ENCODE measurements at regions of chr2 and their contacts with region 1.

Region 1: GRCh38 chr2:112075490-112076260 is 20.6 kb downstream of the TMEM87B start:
- DNase-seq: peak; percentile 86
- H3K4me3 ChIP-seq: peak overlapping the region in 2 of 3 experiments; percentile 26 to 66
- H3K27ac ChIP-seq: peak overlapping the region; percentile 98
- H3K4me1 ChIP-seq: peaks cover 34% of the 10 kb centered on the region
- H3K27me3 ChIP-seq: no peaks in the 10 kb centered on the region
- CTCF ChIP-seq: no peak
- POLR2A ChIP-seq: peak; percentile 40

Region 2: DNA sequence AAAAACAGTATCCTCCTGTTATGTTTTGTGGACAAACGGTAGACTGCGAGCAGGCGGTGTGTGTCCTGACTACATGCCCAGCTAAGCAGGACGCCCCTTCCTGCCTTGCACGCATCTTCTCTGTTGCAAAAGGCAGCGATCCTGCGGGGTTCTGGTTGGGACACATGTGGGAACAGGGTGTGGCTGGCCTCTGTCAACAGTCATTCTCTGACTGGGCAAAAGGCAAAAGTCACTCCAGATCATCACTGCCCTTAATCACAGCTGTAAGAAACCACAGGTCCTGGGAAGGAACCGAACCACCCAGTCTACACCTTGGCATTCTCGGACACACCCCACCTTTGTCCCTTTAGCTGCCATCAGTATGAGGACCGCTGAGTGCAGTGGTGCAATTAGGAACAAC is 64.9 kb before region 1 on chr2:
- CTCF ChIA-PET with region 1: no interaction called
- POLR2A ChIA-PET with region 1: no interaction called
- dilution Hi-C with region 1: no loop called
- intact Hi-C with region 1: no loop called
- DNase-seq: no peak
- H3K4me3 ChIP-seq: no peak overlapping the region
- H3K27ac ChIP-seq: no peak overlapping the region
- H3K4me1 ChIP-seq: peaks cover 7% of the 10 kb centered on the region
- H3K27me3 ChIP-seq: no peaks in the 10 kb centered on the region
- CTCF ChIP-seq: no peak
- POLR2A ChIP-seq: no peak

Region 3: DNA sequence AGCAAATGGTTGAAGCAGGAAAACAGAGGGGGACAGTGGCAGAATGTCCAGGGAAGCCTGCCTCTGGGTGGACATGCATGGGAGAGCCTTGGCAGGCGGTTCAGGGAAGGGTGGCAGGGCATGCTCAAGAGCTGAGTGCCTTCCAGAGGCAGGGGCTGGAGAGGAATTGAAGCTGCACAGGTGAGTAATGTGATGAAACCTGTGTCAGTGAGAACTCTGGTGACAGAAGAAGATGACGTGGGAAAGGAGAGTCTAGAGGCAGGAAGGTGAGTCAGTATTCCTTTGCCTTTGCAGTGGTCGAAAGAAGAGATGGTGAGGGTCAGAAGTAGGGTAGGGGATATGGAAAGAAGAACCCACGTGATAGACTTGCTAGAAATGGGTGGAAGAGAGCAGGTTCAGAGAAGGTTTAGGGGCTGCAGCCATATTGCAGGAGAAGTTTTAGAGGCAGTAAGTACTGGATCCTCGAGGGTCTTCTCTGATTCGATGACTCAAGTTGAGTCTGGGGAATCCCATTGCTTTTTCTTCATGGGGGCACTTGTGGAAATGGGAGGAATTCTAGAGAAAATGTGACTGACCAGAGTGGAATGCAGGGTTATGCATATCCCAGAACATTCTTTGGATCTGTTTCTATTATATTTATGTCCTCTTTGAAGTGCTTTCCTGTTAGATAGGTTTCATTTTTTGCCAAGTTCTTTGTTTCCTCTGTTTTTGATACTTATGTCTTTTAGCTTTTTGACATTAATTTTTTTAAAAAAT is 16.8 kb after region 1 on chr2:
- CTCF ChIA-PET with region 1: interaction called, 9 read pairs
- POLR2A ChIA-PET with region 1: no interaction called
- dilution Hi-C with region 1: no loop called
- intact Hi-C with region 1: loop called (anchors 2 kb)
- DNase-seq: peak; percentile 89
- H3K4me3 ChIP-seq: no peak overlapping the region
- H3K27ac ChIP-seq: peak overlapping the region; percentile 90
- H3K4me1 ChIP-seq: peaks cover 30% of the 10 kb centered on the region
- H3K27me3 ChIP-seq: no peaks in the 10 kb centered on the region
- CTCF ChIP-seq: no peak
- POLR2A ChIP-seq: peak; percentile 15

Region 4: DNA sequence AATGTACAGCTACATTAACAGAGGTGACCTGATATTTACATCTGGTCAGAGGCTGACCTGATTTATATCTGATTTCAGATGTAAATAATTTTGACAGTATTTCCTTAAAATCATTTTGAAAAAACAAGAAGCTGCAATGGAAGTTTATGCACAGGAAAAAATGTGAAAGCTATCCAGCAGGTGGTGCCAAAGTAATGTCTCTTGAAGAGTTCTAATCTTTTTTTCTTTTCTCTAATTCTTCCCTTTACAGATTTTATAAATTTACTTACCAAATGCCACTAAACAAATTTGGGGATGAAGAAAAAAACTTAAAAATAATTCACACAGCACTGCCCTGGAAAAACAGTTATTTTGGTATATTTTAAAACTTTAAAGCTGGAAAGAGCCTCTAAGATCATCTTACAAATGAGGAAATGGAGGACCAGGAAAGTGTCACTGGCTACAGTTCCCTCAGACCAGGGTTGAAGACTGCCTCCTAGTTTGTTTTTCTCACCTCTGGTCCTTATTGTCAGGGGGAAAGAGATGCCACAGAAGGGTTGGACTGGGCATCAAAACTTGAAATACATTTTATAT is 46.1 kb after region 1 on chr2:
- CTCF ChIA-PET with region 1: no interaction called
- POLR2A ChIA-PET with region 1: no interaction called
- dilution Hi-C with region 1: no loop called
- intact Hi-C with region 1: no loop called
- DNase-seq: peak; percentile 77
- H3K4me3 ChIP-seq: no peak overlapping the region
- H3K27ac ChIP-seq: no peak overlapping the region
- H3K4me1 ChIP-seq: no peaks in the 10 kb centered on the region
- H3K27me3 ChIP-seq: no peaks in the 10 kb centered on the region
- CTCF ChIP-seq: peak; percentile 30 to 49
- POLR2A ChIP-seq: no peak